Heart left ventricle (tissue), 16 donors: ENCODE measurements at regions of chr1 and their contacts with region 1.

Region 1: GRCh38 chr1:244272471-244273261 is 179.0 kb downstream of the ADSS2 start:
- DNase-seq: peak in 4 of 5 donors; percentile 40 to 68 (median 56)
- ATAC-seq: peak; percentile 52 to 89 (median 85)
- H3K4me3 ChIP-seq: no peak overlapping the region
- H3K27ac ChIP-seq: peak overlapping the region in 3 of 12 donors; percentile 7 to 32 (median 16)
- H3K4me1 ChIP-seq: peaks cover 0 to 16% (median 0%) of the 10 kb centered on the region in 12 donors
- H3K27me3 ChIP-seq: no peaks in the 10 kb centered on the region
- CTCF ChIP-seq: peak; percentile 87 to 99 (median 93)
- POLR2A ChIP-seq: no peak

Region 2: GRCh38 chr1:243490748-243491686 is 781.6 kb before region 1 on chr1:
- intact Hi-C with region 1: loop called in 2 of 10 experiments (anchors 5 to 10 kb)
- DNase-seq: no peak
- ATAC-seq: no peak
- H3K4me3 ChIP-seq: no peak overlapping the region
- H3K27ac ChIP-seq: peak overlapping the region in 1 of 12 donors; percentile 26
- H3K4me1 ChIP-seq: peaks cover 0 to 21% (median 8%) of the 10 kb centered on the region in 12 donors
- H3K27me3 ChIP-seq: no peaks in the 10 kb centered on the region
- CTCF ChIP-seq: no peak
- POLR2A ChIP-seq: no peak

Region 3: GRCh38 chr1:243748706-243749283 is 523.9 kb before region 1 on chr1:
- intact Hi-C with region 1: loop called in 5 of 10 experiments (anchors 5 to 10 kb)
- DNase-seq: peak in 1 of 5 donors; percentile 24
- ATAC-seq: peak; percentile 78 to 91 (median 88)
- H3K4me3 ChIP-seq: no peak overlapping the region
- H3K27ac ChIP-seq: no peak overlapping the region
- H3K4me1 ChIP-seq: peaks cover 0 to 24% (median 6%) of the 10 kb centered on the region in 12 donors
- H3K27me3 ChIP-seq: no peaks in the 10 kb centered on the region
- CTCF ChIP-seq: peak; percentile 67 to 88 (median 82)
- POLR2A ChIP-seq: no peak

Region 4: GRCh38 chr1:243946946-243947345 is 325.7 kb before region 1 on chr1:
- intact Hi-C with region 1: loop called in 2 of 10 experiments (anchors 2 to 10 kb)
- DNase-seq: no peak
- ATAC-seq: peak in 2 of 4 donors; percentile 45 to 55
- H3K4me3 ChIP-seq: no peak overlapping the region
- H3K27ac ChIP-seq: no peak overlapping the region
- H3K4me1 ChIP-seq: peaks cover 0 to 3% (median 0%) of the 10 kb centered on the region in 12 donors
- H3K27me3 ChIP-seq: no peaks in the 10 kb centered on the region
- CTCF ChIP-seq: peak in 11 of 12 donors; percentile 22 to 55 (median 41)
- POLR2A ChIP-seq: no peak

Region 5: DNA sequence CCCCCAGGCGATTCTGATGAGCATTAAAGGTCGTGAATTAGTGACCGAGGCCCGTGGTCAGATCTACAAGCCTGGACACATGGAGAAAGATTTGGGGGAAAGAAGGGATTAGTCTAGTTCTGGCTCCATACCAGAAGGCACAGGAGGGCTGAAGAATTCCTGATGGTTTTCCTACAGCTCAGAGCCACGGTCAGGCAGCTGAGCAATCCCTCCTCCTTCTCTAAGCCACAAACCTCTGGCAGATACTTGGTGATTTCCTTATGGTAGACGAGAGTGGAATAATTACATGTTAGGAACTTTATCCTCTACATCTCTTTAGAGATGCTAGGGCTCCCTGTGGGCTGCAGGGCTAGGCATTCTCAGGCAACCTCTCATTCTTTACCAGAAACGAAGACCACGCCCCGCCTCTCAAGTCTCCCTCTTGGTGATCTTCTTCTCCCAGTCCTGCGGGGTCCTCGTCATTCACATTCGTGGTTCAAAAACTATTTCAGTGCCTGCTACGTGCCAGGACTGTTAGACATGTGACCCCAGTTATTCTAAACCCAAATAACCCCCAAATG is 242.1 kb before region 1 on chr1:
- intact Hi-C with region 1: loop called in 1 of 10 experiments (anchors 10 kb)
- DNase-seq: no peak
- ATAC-seq: no peak
- H3K4me3 ChIP-seq: no peak overlapping the region
- H3K27ac ChIP-seq: no peak overlapping the region
- H3K4me1 ChIP-seq: peaks cover 0 to 8% (median 0%) of the 10 kb centered on the region in 12 donors
- H3K27me3 ChIP-seq: peaks cover 0 to under 1% (median 0%) of the 10 kb centered on the region in 9 donors
- CTCF ChIP-seq: no peak
- POLR2A ChIP-seq: no peak

Region 6: DNA sequence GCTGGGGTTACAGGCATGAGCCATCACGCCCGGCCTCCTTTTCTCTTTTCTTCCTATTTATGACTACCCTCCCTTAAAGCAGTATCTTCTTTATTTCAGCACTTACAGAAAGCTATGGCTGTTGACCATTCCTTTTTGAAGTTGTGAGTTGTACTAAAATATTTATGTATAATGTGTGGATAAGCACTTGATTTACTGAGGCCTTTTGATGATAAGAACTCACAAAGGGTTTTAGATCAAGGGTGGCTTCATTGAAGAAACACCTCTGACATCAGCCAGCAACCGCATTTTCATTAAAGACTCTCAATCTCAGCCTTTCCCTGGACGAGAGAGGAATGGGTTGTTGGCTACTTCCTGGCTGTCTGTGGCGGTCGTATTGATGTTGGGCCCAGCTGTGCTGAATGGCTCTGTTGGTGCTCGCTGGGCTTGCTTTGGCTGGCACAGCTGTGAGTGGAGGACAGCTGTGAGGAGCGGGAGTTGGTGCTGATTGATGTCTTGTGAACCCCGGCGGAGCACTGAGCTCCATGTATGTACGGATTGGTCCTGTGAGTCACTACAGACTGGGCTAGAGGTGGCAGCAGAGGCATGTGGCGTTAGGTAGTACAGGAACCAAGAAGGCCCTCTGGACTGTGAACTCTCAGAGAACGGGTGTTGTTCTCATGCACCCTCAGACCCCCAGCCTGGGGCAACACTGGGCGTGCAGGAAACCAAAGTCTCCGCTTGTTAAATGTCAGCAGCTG is 1091.0 kb after region 1 on chr1:
- intact Hi-C with region 1: no loop called
- DNase-seq: no peak
- ATAC-seq: no peak
- H3K4me3 ChIP-seq: no peak overlapping the region
- H3K27ac ChIP-seq: no peak overlapping the region
- H3K4me1 ChIP-seq: no peaks in the 10 kb centered on the region
- H3K27me3 ChIP-seq: no peaks in the 10 kb centered on the region
- CTCF ChIP-seq: no peak
- POLR2A ChIP-seq: no peak